A549 (cell line): ENCODE measurements at regions of chr15 and their contacts with region 1.

Region 1: DNA sequence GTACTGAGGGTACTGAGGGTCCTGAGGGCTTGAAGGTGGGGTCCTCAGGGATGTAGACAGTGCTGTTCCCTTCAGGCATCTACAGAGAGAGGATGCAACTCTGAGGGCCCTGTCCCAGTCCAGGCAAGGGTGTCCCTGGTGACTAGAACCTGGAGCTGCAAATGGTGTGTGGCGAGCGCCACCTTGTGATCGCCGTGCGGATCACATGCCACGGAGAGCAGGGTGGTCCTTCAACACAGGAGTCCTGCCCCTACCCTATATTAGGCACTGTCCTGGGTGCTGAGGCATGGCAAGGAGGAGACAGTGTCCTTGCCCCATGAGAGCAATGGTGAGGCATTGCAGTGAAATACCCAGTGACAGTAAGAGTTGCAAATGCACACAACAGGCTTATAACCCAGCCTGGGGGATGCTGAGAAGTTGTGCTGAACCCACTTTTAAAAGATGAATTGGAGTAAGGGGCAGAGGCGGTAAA is 23.6 kb downstream of the RHCG start:
- DNase-seq: peak; percentile 78 to 88
- ATAC-seq: peak; percentile 74 to 95
- H3K4me3 ChIP-seq: no peak overlapping the region
- H3K27ac ChIP-seq: no peak overlapping the region
- H3K4me1 ChIP-seq: peaks cover 4% of the 10 kb centered on the region; the same call in 1 of the 3 replicates
- CTCF ChIP-seq: peak; percentile 94
- EP300 ChIP-seq: no peak
- POLR2A ChIP-seq: no peak
- RAD21 ChIP-seq: peak; percentile 92 to 96

Region 2: GRCh38 chr15:89206908-89207331 is 265.9 kb before region 1 on chr15:
- CTCF ChIA-PET with region 1: interaction called, 10 read pairs
- POLR2A ChIA-PET with region 1: no interaction called
- DNase-seq: peak; percentile 82 to 99
- ATAC-seq: peak; percentile 98 to 99
- H3K4me3 ChIP-seq: peak overlapping the region; percentile 36
- H3K27ac ChIP-seq: peak overlapping the region; percentile 23 to 65; a peak in 4 of 6 replicates
- H3K4me1 ChIP-seq: no peaks in the 10 kb centered on the region
- CTCF ChIP-seq: peak; percentile 97
- EP300 ChIP-seq: no peak
- POLR2A ChIP-seq: no peak
- RAD21 ChIP-seq: peak; percentile 93 to 94

Region 3: GRCh38 chr15:89416141-89416853 is 56.5 kb before region 1 on chr15:
- CTCF ChIA-PET with region 1: interaction called, 81 read pairs
- POLR2A ChIA-PET with region 1: no interaction called
- DNase-seq: peak; percentile 90 to 94
- ATAC-seq: peak; percentile 74 to 91
- H3K4me3 ChIP-seq: no peak overlapping the region
- H3K27ac ChIP-seq: no peak overlapping the region
- H3K4me1 ChIP-seq: peaks cover under 1% of the 10 kb centered on the region; the same call in 1 of the 3 replicates
- CTCF ChIP-seq: peak; percentile 93
- EP300 ChIP-seq: no peak
- POLR2A ChIP-seq: no peak
- RAD21 ChIP-seq: peak; percentile 59 to 63

Region 4: GRCh38 chr15:89442671-89443307 is 30.0 kb before region 1 on chr15:
- CTCF ChIA-PET with region 1: interaction called, 158 read pairs
- POLR2A ChIA-PET with region 1: no interaction called
- DNase-seq: peak; percentile 68 to 88
- ATAC-seq: peak; percentile 73 to 93
- H3K4me3 ChIP-seq: no peak overlapping the region
- H3K27ac ChIP-seq: no peak overlapping the region
- H3K4me1 ChIP-seq: no peaks in the 10 kb centered on the region
- CTCF ChIP-seq: peak; percentile 84
- EP300 ChIP-seq: no peak
- POLR2A ChIP-seq: no peak
- RAD21 ChIP-seq: peak; percentile 77

Region 5: GRCh38 chr15:89457097-89457496 is 15.7 kb before region 1 on chr15:
- CTCF ChIA-PET with region 1: interaction called, 27 read pairs
- POLR2A ChIA-PET with region 1: no interaction called
- DNase-seq: peak; percentile 77 to 81
- ATAC-seq: peak in 1 of 2 experiments; percentile 83; a peak in 3 of 6 replicates
- H3K4me3 ChIP-seq: no peak overlapping the region
- H3K27ac ChIP-seq: no peak overlapping the region
- H3K4me1 ChIP-seq: peaks cover 16% of the 10 kb centered on the region; the same call in 2 of the 3 replicates
- CTCF ChIP-seq: no peak
- EP300 ChIP-seq: no peak
- POLR2A ChIP-seq: no peak
- RAD21 ChIP-seq: no peak

Region 6: GRCh38 chr15:89496155-89497098 is 23.6 kb after region 1 on chr15 and contains the start of gene RHCG:
- CTCF ChIA-PET with region 1: interaction called, 132 read pairs
- POLR2A ChIA-PET with region 1: no interaction called
- DNase-seq: peak; percentile 80 to 94
- ATAC-seq: peak; percentile 69 to 78
- H3K4me3 ChIP-seq: peak within 1 kb of the TSS; percentile 51
- H3K27ac ChIP-seq: peak within 1 kb of the TSS; percentile 80 to 88
- H3K4me1 ChIP-seq: peaks cover 44% of the 10 kb centered on the region
- CTCF ChIP-seq: peak; percentile 74
- EP300 ChIP-seq: peak; percentile 66 to 73; a peak in 2 of 5 replicates
- POLR2A ChIP-seq: peak; percentile 49
- RAD21 ChIP-seq: peak; percentile 68
- polyA plus RNA-seq, gene RHCG: 11.0 and 16.6 TPM in 2 replicates

Region 7: GRCh38 chr15:89680282-89680873 is 207.6 kb after region 1 on chr15:
- CTCF ChIA-PET with region 1: no interaction called
- POLR2A ChIA-PET with region 1: no interaction called
- DNase-seq: peak in 1 of 2 experiments; percentile 55
- ATAC-seq: peak; percentile 60 to 81
- H3K4me3 ChIP-seq: no peak overlapping the region
- H3K27ac ChIP-seq: peak overlapping the region in 1 of 2 experiments; percentile 24; a peak in 3 of 6 replicates
- H3K4me1 ChIP-seq: peaks cover 21% of the 10 kb centered on the region
- CTCF ChIP-seq: no peak
- EP300 ChIP-seq: no peak
- POLR2A ChIP-seq: no peak
- RAD21 ChIP-seq: no peak

Region 8: DNA sequence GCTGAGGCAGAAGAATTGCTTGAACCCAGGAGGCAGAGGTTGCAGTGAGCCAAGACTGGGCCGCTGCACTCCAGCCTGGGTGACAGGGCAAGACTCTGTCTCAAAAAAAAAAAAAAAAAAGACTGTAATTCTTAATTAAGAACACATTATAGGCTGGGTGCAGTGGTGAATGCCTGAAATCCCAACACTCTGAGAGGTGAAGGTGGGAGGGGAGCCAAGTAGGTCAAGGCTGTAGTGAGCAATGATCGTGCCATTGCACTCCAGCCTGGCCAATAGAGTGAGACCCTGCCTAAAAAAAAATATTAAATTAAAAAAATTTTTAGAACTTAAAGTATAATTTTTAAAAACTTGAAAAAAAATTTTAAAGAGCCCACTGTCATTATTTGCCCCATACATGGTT is 453.3 kb after region 1 on chr15:
- CTCF ChIA-PET with region 1: no interaction called
- POLR2A ChIA-PET with region 1: no interaction called
- DNase-seq: no peak
- ATAC-seq: no peak
- H3K4me3 ChIP-seq: no peak overlapping the region
- H3K27ac ChIP-seq: no peak overlapping the region
- H3K4me1 ChIP-seq: no peaks in the 10 kb centered on the region
- CTCF ChIP-seq: no peak
- EP300 ChIP-seq: no peak
- POLR2A ChIP-seq: no peak
- RAD21 ChIP-seq: no peak